Left lung (tissue), 14 donors: ENCODE measurements at regions of chr9 and their contacts with region 1.

Region 1: DNA sequence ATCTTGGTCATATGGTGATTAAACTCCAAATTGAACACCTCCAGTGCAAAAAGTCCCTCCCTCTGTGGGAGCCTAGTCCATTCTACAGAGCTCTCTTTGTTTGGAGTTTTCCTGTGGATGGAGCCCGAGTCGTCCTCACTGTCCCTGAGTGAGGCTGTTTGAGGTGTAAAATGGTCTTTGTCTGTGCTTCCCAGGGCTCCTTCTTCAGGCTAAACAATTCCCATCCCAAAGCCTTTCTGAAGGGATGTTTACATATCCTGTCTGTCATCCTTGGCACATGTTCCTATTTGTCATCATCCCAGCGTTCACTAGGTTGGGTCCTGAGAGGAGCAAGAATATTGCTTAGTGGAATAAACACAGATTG is 68.9 kb downstream of the COL27A1 start:
- DNase-seq: no peak
- ATAC-seq: no peak
- H3K4me3 ChIP-seq: no peak overlapping the region
- H3K27ac ChIP-seq: no peak overlapping the region
- H3K4me1 ChIP-seq: no peaks in the 10 kb centered on the region
- H3K27me3 ChIP-seq: no peaks in the 10 kb centered on the region
- CTCF ChIP-seq: no peak

Region 2: GRCh38 chr9:114163517-114163951 is 60.7 kb before region 1 on chr9:
- intact Hi-C with region 1: loop called in 1 of 2 experiments (anchors 10 kb)
- DNase-seq: peak in 2 of 4 donors; percentile 57 to 70
- ATAC-seq: peak; percentile 94
- H3K4me3 ChIP-seq: no peak overlapping the region
- H3K27ac ChIP-seq: no peak overlapping the region
- H3K4me1 ChIP-seq: peaks cover 6% of the 10 kb centered on the region in 2 donors
- H3K27me3 ChIP-seq: peaks cover 0 to 6% of the 10 kb centered on the region in 2 donors
- CTCF ChIP-seq: no peak